Caco-2 (cell line): ENCODE measurements at regions of chr19 and their contacts with region 1.

Region 1: GRCh38 chr19:17305517-17306284 is at the start of gene MRPL34:
- DNase-seq: peak; percentile 98 to 99
- H3K4me3 ChIP-seq: peak within 1 kb of the TSS; percentile 56
- H3K4me3 Mint-ChIP-seq: peak within 1 kb of the TSS; percentile 78
- H3K27ac Mint-ChIP-seq: peak within 1 kb of the TSS; percentile 74
- H3K4me1 ChIP-seq: peaks cover 21% of the 10 kb centered on the region
- H3K4me1 Mint-ChIP-seq: peaks cover 8% of the 10 kb centered on the region
- H3K27me3 ChIP-seq: no peaks in the 10 kb centered on the region
- H3K27me3 Mint-ChIP-seq: no peaks in the 10 kb centered on the region
- CTCF ChIP-seq: peak; percentile 82 to 86
- total RNA-seq, gene MRPL34: 78.9 and 88.5 TPM in 2 replicates

Region 2: DNA sequence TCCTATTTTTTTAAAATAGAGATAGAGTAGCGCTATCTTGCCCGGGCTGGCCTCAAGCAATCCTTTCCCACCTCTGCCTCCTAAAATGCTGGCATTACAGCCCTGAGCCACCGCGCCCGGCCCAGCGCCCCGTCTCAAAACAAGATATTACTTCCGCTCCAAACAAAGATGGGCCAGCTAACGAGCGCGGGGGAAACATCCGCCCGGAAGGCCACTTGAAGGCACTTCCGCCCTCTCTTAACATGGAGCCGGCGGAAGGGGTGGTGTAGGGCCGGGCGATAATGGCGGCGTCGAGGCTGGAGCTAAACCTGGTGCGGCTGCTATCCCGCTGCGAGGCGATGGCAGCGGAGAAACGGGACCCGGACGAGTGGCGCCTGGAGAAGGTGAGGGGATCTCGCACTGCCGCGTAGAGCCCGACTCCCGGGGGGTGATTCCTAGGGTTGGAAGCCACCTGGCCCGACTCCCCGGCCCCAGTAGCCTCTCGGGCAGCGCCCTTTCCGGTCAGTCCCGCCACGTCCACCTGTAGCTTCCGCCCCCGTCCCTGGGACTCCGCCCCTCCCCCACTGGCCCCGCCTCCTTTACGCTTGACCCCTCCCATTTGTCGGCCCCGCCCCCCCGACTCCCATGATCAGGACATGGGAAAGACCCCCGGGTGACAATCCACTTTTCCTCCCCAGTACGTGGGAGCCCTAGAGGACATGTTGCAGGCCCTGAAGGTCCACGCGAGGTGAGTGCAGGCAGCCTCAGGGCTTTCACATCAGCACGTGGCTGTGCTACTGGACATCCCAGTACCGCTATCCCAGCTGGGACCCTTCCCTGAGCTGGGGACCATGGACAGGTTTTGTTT is 90.4 kb before region 1 on chr19 and contains the start of gene USE1:
- CTCF ChIA-PET with region 1: interaction called, 7 read pairs
- POLR2A ChIA-PET with region 1: interaction called, 10 read pairs
- intact Hi-C with region 1: no loop called
- DNase-seq: peak; percentile 87 to 89
- H3K4me3 ChIP-seq: peak within 1 kb of the TSS; percentile 86
- H3K4me3 Mint-ChIP-seq: peak within 1 kb of the TSS; percentile 95
- H3K27ac Mint-ChIP-seq: peak within 1 kb of the TSS; percentile 98
- H3K4me1 ChIP-seq: peaks cover 11% of the 10 kb centered on the region; the same call in 1 of the 2 replicates
- H3K4me1 Mint-ChIP-seq: no peaks in the 10 kb centered on the region
- H3K27me3 ChIP-seq: no peaks in the 10 kb centered on the region
- H3K27me3 Mint-ChIP-seq: no peaks in the 10 kb centered on the region
- CTCF ChIP-seq: no peak
- total RNA-seq, gene USE1: 20.2 and 20.7 TPM in 2 replicates

Region 3: GRCh38 chr19:17266975-17267788 is 38.5 kb before region 1 on chr19 and contains the start of gene BABAM1:
- CTCF ChIA-PET with region 1: interaction called, 9 read pairs
- POLR2A ChIA-PET with region 1: interaction called, 11 read pairs
- intact Hi-C with region 1: no loop called
- DNase-seq: peak; percentile 97 to 98
- H3K4me3 ChIP-seq: peak within 1 kb of the TSS; percentile 93
- H3K4me3 Mint-ChIP-seq: peak within 1 kb of the TSS; percentile 74
- H3K27ac Mint-ChIP-seq: peak within 1 kb of the TSS; percentile 80
- H3K4me1 ChIP-seq: no peaks in the 10 kb centered on the region; the same call in 1 of the 2 replicates
- H3K4me1 Mint-ChIP-seq: peaks cover 7% of the 10 kb centered on the region
- H3K27me3 ChIP-seq: no peaks in the 10 kb centered on the region
- H3K27me3 Mint-ChIP-seq: no peaks in the 10 kb centered on the region
- CTCF ChIP-seq: no peak
- total RNA-seq, gene BABAM1: 91.7 and 98.8 TPM in 2 replicates

Region 4: DNA sequence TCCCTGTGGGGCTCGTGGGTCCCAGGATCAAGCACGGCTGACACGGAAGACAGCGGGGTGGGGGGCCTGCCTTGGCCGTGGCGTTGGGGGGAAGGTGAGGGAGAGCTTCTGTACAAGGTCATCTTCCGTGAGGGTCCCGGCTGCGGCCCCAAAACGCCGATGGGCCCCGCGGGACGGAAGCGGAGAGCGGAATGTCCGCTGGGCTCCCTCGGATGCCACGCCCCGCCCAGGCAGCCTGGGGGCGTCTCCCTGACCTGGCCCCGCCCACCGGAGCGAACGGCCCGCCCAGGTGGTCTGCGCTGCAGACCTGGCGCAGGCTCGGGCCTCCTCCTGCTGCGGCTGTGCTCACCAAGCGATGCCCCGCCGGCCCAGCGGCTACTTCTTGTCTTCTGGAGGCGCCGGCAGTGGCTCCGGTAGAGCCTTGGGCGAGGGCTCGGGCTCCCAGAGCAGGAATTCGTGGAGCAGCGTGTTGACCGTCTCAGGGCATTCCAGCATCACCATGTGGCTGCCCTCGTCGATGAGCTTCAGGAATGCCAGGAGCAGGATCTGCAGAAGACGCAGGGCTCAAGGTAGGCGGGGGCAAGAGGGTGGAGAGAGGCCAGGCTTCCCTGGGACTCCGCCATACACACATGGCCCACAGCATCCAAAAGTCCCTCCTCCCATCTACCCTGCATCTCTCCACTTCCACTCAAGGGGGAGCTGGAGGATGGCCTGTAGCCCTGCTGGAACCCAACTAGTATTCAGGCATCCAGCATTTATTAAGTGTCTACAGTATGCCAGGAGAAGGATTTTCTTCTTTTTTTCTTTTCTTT is 13.2 kb before region 1 on chr19:
- CTCF ChIA-PET with region 1: interaction called, 44 read pairs
- POLR2A ChIA-PET with region 1: interaction called, 12 read pairs
- intact Hi-C with region 1: loop called (anchors 1 kb)
- DNase-seq: peak; percentile 91 to 92
- H3K4me3 ChIP-seq: peak overlapping the region; percentile 70
- H3K4me3 Mint-ChIP-seq: peak overlapping the region; percentile 83
- H3K27ac Mint-ChIP-seq: peak overlapping the region; percentile 84
- H3K4me1 ChIP-seq: no peaks in the 10 kb centered on the region
- H3K4me1 Mint-ChIP-seq: no peaks in the 10 kb centered on the region
- H3K27me3 ChIP-seq: no peaks in the 10 kb centered on the region
- H3K27me3 Mint-ChIP-seq: no peaks in the 10 kb centered on the region
- CTCF ChIP-seq: peak; percentile 68 to 77

Region 5: DNA sequence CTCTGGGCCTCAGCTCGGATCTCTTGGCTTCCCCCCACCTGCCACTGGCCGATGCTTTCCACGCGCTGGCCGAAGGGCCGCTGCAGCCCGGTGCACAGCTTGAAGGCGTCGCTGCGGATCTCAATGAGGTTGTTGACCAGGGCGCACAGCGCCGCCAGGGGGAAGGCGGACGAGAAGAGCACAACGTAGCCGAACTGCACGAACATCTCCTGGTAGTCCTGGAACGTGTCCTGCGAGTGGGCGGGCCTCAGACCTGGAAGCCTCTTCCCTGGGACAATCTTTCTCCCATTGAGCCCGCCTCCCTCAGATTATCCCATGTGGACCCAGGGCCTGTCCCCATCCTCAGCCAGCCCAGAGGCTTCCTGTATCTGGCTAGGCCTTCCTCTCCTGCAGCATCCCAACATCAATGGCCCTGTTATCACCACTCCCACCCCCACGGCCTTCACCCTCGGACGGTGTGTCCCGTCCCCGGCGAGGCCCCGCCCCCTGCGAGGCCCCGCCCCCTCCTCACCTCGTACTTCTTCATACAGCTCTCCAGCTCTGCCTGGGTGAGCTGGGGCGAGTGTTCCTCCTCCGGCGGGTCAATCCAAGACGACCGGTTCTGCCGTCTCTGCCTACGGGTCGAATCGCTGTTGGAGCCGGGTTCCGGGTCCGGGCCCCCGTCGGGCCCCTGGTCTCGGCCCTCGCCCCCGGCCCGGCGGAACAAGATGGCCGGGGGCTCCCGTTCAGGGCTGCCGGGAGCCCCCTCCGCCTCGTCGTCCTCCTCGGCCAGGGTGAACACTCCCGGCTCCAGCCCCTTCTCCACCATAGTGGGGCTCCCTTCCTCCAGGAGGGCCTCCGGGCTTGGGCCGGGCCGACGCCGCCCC is 22.2 kb after region 1 on chr19:
- CTCF ChIA-PET with region 1: interaction called, 13 read pairs
- POLR2A ChIA-PET with region 1: interaction called, 17 read pairs
- intact Hi-C with region 1: no loop called
- DNase-seq: peak; percentile 74 to 86
- H3K4me3 ChIP-seq: peak overlapping the region; percentile 57
- H3K4me3 Mint-ChIP-seq: peak overlapping the region; percentile 75
- H3K27ac Mint-ChIP-seq: peak overlapping the region; percentile 50
- H3K4me1 ChIP-seq: peaks cover 20% of the 10 kb centered on the region
- H3K4me1 Mint-ChIP-seq: no peaks in the 10 kb centered on the region
- H3K27me3 ChIP-seq: no peaks in the 10 kb centered on the region
- H3K27me3 Mint-ChIP-seq: no peaks in the 10 kb centered on the region
- CTCF ChIP-seq: peak in 1 of 2 experiments; percentile 36

Region 6: GRCh38 chr19:17336872-17337722 is 31.4 kb after region 1 on chr19 and contains the start of gene GTPBP3:
- CTCF ChIA-PET with region 1: interaction called, 8 read pairs
- POLR2A ChIA-PET with region 1: interaction called, 8 read pairs
- intact Hi-C with region 1: loop called (anchors 2 kb)
- DNase-seq: peak; percentile 96 to 98
- H3K4me3 ChIP-seq: peak within 1 kb of the TSS; percentile 59
- H3K4me3 Mint-ChIP-seq: peak within 1 kb of the TSS; percentile 85
- H3K27ac Mint-ChIP-seq: peak within 1 kb of the TSS; percentile 97
- H3K4me1 ChIP-seq: 0 out of 2 replicates have a peak, but pooled peaks cover 9% of the 10 kb centered on the region
- H3K4me1 Mint-ChIP-seq: no peaks in the 10 kb centered on the region
- H3K27me3 ChIP-seq: no peaks in the 10 kb centered on the region
- H3K27me3 Mint-ChIP-seq: no peaks in the 10 kb centered on the region
- CTCF ChIP-seq: no peak
- total RNA-seq, gene GTPBP3: 50.1 and 50.7 TPM in 2 replicates

Region 7: DNA sequence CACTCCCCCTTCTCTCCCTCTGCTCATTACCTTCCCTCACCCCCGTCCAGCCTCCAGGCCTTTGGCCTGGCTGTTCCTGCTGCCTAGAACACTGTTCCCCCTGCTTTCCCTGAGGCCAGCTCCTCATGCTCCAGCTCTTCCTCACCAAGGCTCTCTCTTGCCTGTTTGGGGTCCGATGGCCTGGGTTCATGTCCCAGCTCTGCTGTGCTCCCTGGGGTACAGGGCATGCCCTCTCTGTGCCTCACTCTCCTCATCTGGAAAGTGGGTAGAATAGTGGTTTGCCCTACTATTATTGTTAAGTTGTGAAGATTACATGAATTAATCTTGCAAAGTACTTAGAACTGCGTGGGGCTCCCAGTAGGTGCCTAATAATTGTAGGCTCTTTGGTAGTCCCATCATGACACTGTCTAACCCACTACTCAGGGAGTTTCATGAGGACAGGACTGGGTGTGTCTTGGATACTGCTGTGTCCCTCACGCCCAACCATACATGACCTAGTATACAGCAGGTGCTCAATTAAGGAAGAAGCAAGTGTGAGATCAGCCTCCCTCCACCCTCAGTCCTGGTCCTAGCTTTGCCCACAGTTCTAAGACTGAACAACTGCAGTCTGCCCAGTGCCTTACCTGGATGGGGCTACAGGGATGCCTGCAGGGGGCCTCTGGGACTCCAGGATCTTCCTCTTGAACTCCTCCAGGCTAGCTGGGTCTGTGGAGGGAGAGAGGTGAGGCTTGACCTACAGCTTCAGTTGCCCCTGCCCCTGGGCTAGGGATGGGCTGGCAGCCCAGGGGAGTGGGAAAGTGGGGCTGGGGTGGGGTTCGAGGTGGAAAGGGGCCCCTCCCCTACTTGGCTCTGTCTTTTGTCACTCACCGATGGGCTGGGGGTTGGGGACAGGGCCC is 54.5 kb after region 1 on chr19:
- CTCF ChIA-PET with region 1: no interaction called
- POLR2A ChIA-PET with region 1: no interaction called
- intact Hi-C with region 1: no loop called
- DNase-seq: no peak
- H3K4me3 ChIP-seq: no peak overlapping the region
- H3K4me3 Mint-ChIP-seq: no peak overlapping the region
- H3K27ac Mint-ChIP-seq: no peak overlapping the region
- H3K4me1 ChIP-seq: no peaks in the 10 kb centered on the region
- H3K4me1 Mint-ChIP-seq: no peaks in the 10 kb centered on the region
- H3K27me3 ChIP-seq: no peaks in the 10 kb centered on the region
- H3K27me3 Mint-ChIP-seq: peaks cover 8% of the 10 kb centered on the region
- CTCF ChIP-seq: no peak

Region 8: GRCh38 chr19:17511724-17512573 is 206.2 kb after region 1 on chr19:
- CTCF ChIA-PET with region 1: no interaction called
- POLR2A ChIA-PET with region 1: no interaction called
- intact Hi-C with region 1: no loop called
- DNase-seq: peak; percentile 72 to 73
- H3K4me3 ChIP-seq: peak overlapping the region; percentile 77
- H3K4me3 Mint-ChIP-seq: peak overlapping the region; percentile 85
- H3K27ac Mint-ChIP-seq: peak overlapping the region; percentile 91
- H3K4me1 ChIP-seq: peaks cover 8% of the 10 kb centered on the region
- H3K4me1 Mint-ChIP-seq: peaks cover 5% of the 10 kb centered on the region
- H3K27me3 ChIP-seq: no peaks in the 10 kb centered on the region
- H3K27me3 Mint-ChIP-seq: no peaks in the 10 kb centered on the region
- CTCF ChIP-seq: peak in 1 of 2 experiments; percentile 26